Colonic mucosa (tissue), 4 donors: ENCODE measurements at regions of chr2 and their contacts with region 1.

Region 1: DNA sequence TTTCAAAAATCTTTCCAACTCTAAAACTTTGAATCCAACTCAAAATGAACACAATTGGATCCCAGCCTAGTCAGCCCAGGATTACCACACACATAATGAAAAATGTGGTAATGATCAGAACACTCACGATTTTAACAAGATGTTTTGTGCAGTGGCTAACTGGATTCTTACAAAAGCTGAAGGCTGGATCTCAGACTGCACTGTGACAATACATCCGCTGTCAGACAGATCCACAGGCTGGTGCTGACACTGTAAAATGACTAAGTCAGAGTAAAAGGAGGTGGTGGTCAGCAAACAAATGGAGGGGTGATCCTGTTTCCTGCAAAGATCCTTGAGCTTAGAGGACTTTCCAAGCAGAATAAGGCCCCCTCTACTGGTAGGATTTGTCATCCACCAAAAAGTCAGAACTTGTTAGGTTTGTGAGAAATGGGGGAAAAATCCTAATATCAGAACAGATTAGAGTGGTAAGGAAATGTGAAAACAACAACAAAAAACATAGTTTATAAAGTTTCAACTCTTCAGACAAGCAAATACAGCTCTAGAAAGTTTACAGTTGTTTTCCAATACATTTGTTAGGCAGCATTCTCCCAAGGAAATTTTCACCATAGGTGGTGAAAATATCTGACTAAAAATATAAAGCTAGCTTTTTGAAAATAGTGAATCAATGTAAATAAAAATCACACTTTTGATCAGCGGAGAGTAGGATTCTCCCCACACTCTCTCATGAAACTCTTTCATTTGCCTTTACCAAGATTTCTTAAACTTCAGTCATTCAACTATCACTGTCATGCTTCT is 211.9 kb downstream of the AGPS start:
- DNase-seq: peak; percentile 62
- H3K4me3 ChIP-seq: no peak overlapping the region
- H3K27ac ChIP-seq: no peak overlapping the region
- H3K4me1 ChIP-seq: peaks cover 3% of the 10 kb centered on the region
- H3K27me3 ChIP-seq: no peaks in the 10 kb centered on the region
- CTCF ChIP-seq: peak; percentile 42

Region 2: DNA sequence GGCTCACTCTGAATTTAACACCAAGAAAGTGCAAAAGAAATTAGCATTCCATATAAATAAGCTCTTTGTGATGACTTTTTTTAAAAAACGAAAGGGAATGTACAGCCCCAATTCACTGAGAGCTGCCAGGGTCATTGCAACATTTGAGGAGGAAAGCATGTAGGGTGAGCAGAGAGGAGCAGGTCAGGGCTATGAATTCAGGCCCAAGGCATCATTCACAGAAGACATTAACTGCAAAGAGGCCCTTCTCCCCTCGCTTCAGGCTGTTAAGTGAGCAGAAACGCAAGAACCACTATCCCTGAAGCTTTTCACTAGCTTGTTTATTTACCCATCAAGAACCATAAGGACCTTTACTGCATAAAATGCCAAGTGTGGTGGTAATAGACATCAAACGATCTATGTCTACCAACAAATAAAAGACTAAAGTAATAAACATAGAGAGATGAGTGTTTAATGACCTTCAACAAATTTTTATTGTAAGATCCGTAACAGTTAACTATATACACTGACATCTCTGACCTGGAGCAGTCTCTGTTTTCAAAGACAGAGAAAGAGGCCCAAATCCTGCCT is 725.0 kb before region 1 on chr2:
- intact Hi-C with region 1: no loop called
- DNase-seq: no peak
- H3K4me3 ChIP-seq: no peak overlapping the region
- H3K27ac ChIP-seq: no peak overlapping the region
- H3K4me1 ChIP-seq: no peaks in the 10 kb centered on the region
- H3K27me3 ChIP-seq: no peaks in the 10 kb centered on the region
- CTCF ChIP-seq: no peak

Region 3: GRCh38 chr2:177489719-177490301 is 114.7 kb before region 1 on chr2:
- intact Hi-C with region 1: loop called (anchors 5 kb)
- DNase-seq: no peak
- H3K4me3 ChIP-seq: no peak overlapping the region
- H3K27ac ChIP-seq: no peak overlapping the region
- H3K4me1 ChIP-seq: no peaks in the 10 kb centered on the region
- H3K27me3 ChIP-seq: no peaks in the 10 kb centered on the region
- CTCF ChIP-seq: peak; percentile 31

Region 4: GRCh38 chr2:177651833-177652232 is 47.4 kb after region 1 on chr2:
- intact Hi-C with region 1: no loop called
- DNase-seq: no peak
- H3K4me3 ChIP-seq: no peak overlapping the region
- H3K27ac ChIP-seq: no peak overlapping the region
- H3K4me1 ChIP-seq: no peaks in the 10 kb centered on the region
- H3K27me3 ChIP-seq: no peaks in the 10 kb centered on the region
- CTCF ChIP-seq: no peak

Region 5: GRCh38 chr2:178066890-178067669 is 462.6 kb after region 1 on chr2:
- intact Hi-C with region 1: no loop called
- DNase-seq: no peak
- H3K4me3 ChIP-seq: no peak overlapping the region
- H3K27ac ChIP-seq: no peak overlapping the region
- H3K4me1 ChIP-seq: no peaks in the 10 kb centered on the region
- H3K27me3 ChIP-seq: no peaks in the 10 kb centered on the region
- CTCF ChIP-seq: no peak